Heart left ventricle (tissue), 16 donors: ENCODE measurements at regions of chrX and their contacts with region 1.

Region 1: GRCh38 chrX:69222103-69223090 is 57.1 kb upstream of the PJA1 start:
- DNase-seq: peak; percentile 43 to 78 (median 58)
- ATAC-seq: peak; percentile 61 to 88 (median 80)
- H3K4me3 ChIP-seq: no peak overlapping the region
- H3K27ac ChIP-seq: no peak overlapping the region
- H3K4me1 ChIP-seq: peaks cover 0 to 8% (median 0%) of the 10 kb centered on the region in 12 donors
- H3K27me3 ChIP-seq: peaks cover 0 to 20% (median 0%) of the 10 kb centered on the region in 9 donors
- CTCF ChIP-seq: peak; percentile 60 to 75 (median 70)
- POLR2A ChIP-seq: no peak

Region 2: GRCh38 chrX:68822641-68823410 is 399.6 kb before region 1 on chrX:
- intact Hi-C with region 1: loop called (anchors 1 to 5 kb)
- DNase-seq: peak in 4 of 5 donors; percentile 40 to 62 (median 54)
- ATAC-seq: peak; percentile 49 to 90 (median 86)
- H3K4me3 ChIP-seq: no peak overlapping the region
- H3K27ac ChIP-seq: no peak overlapping the region
- H3K4me1 ChIP-seq: peaks cover 0 to 5% (median 0%) of the 10 kb centered on the region in 12 donors
- H3K27me3 ChIP-seq: peaks cover 0 to 25% (median 0%) of the 10 kb centered on the region in 9 donors
- CTCF ChIP-seq: peak; percentile 34 to 70 (median 64)
- POLR2A ChIP-seq: no peak

Region 3: GRCh38 chrX:68922042-68922441 is 300.4 kb before region 1 on chrX:
- intact Hi-C with region 1: loop called in 1 of 10 experiments (anchors 2 kb)
- DNase-seq: peak in 1 of 5 donors; percentile 32
- ATAC-seq: peak; percentile 10 to 69 (median 46)
- H3K4me3 ChIP-seq: no peak overlapping the region
- H3K27ac ChIP-seq: no peak overlapping the region
- H3K4me1 ChIP-seq: peaks cover 0 to 4% (median 0%) of the 10 kb centered on the region in 12 donors
- H3K27me3 ChIP-seq: no peaks in the 10 kb centered on the region
- CTCF ChIP-seq: peak in 1 of 12 donors; percentile 13
- POLR2A ChIP-seq: no peak

Region 4: GRCh38 chrX:68950937-68951336 is 271.5 kb before region 1 on chrX:
- intact Hi-C with region 1: no loop called
- DNase-seq: no peak
- ATAC-seq: no peak
- H3K4me3 ChIP-seq: no peak overlapping the region
- H3K27ac ChIP-seq: no peak overlapping the region
- H3K4me1 ChIP-seq: no peaks in the 10 kb centered on the region
- H3K27me3 ChIP-seq: peaks cover 0 to 9% (median 0%) of the 10 kb centered on the region in 9 donors
- CTCF ChIP-seq: no peak
- POLR2A ChIP-seq: no peak

Region 5: DNA sequence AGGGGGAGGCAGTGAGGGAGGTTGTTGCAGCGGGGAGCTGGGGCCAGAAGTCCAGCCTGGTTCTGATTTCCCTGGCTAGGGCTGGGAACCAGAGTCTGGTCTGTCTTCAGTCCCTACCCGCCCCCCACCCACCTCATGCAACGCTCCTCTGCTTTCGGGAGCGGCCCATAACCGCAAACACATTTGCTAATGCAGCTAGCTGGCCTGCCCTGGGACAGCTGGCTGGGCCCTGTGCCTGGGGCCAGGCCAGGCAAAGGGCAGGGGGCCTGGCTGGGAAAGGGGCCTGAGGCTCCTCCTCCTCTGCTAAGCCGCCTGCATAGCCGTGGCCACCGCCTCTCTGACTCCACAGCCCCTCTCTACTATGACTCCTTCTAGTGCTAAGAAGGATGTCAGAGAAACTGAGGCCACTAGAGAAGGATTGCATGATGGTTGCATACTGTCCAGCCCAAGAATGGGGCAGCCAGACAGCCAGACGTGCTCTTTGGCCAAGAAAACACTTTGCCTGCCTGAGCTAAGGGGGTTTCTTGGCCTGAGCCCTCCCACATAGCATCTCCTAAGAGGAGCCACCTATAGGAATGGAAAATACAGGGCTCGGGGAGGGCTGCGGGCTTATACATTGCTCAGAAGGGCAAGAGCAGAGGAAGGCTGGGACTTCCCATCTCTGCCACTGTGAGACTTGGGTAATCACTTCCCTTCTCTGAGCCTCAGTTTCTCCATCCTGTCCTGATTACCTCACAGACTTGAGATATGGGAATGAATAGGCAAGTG is 134.0 kb before region 1 on chrX:
- intact Hi-C with region 1: loop called in 8 of 10 experiments (anchors 5 to 10 kb)
- DNase-seq: no peak
- ATAC-seq: no peak
- H3K4me3 ChIP-seq: no peak overlapping the region
- H3K27ac ChIP-seq: no peak overlapping the region
- H3K4me1 ChIP-seq: no peaks in the 10 kb centered on the region
- H3K27me3 ChIP-seq: peaks cover 0 to 5% (median 0%) of the 10 kb centered on the region in 9 donors
- CTCF ChIP-seq: no peak
- POLR2A ChIP-seq: no peak

Region 6: GRCh38 chrX:69093960-69094871 is 128.2 kb before region 1 on chrX:
- intact Hi-C with region 1: loop called in 9 of 10 experiments (anchors 1 to 10 kb)
- DNase-seq: peak in 2 of 5 donors; percentile 31 to 43
- ATAC-seq: peak in 3 of 4 donors; percentile 27 to 50 (median 30)
- H3K4me3 ChIP-seq: no peak overlapping the region
- H3K27ac ChIP-seq: no peak overlapping the region
- H3K4me1 ChIP-seq: no peaks in the 10 kb centered on the region
- H3K27me3 ChIP-seq: peaks cover 0 to 6% (median 0%) of the 10 kb centered on the region in 9 donors
- CTCF ChIP-seq: peak; percentile 23 to 62 (median 46)
- POLR2A ChIP-seq: no peak